ENCODE measurements at regions of chr5 and their contacts with region 1.

Region 1: DNA sequence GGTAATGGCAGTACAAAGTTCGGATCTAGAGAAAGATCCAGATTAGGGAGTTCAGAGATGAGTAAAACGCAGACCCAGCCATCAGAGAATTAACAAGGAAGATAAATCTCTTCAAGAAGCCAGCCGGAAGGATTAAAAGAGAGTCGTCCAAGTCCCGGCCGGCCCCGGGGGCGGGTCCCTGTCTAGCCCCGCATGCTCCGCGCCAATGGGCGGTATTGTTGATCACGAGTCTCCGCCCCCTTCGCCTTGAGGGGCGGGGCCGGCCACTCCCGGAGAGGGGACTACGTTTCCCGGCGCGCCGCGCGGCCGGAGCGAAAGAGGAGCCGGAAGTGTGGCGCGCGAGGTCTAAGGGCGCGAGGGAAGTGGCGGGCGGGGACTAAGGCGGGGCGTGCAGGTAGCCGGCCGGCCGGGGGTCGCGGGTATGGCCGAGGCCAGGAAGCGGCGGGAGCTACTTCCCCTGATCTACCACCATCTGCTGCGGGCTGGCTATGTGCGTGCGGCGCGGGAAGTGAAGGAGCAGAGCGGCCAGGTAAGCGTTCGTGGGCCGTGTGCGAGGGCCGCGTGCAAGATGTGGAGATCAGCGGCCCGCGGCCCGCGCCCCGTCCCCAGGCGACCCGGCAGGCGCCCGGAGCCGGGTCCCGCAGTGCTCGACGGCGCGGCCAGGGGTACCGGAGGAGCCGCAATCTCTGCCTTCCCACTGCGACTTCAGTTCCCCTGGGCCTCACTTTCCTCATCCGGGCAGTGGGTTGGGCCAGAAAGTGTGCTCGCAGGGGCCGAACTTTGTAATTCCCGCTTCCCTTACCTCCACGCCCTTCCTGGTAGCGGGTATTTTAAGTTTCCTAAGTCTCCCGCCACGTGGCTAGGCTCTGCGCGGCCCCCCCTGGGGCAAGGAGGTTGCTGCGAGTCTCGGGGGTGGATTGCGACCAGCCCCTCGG is at the start of gene TCOF1:
- DNase-seq: peak; percentile 96 to 98 (median 96)
- ATAC-seq: peak; percentile 97 to 100 (median 99)
- H3K4me3 ChIP-seq: peak within 1 kb of the TSS; percentile 72 to 99 (median 92)
- H3K27ac ChIP-seq: peak within 1 kb of the TSS in 10 of 12 donors; percentile 41 to 76 (median 65)
- H3K4me1 ChIP-seq: peaks cover 0 to 23% (median 12%) of the 10 kb centered on the region in 12 donors
- H3K27me3 ChIP-seq: no peaks in the 10 kb centered on the region
- CTCF ChIP-seq: peak in 1 of 12 donors; percentile 12
- POLR2A ChIP-seq: no peak
- total RNA-seq, gene TCOF1: 12.6 to 29.9 (median 16.0) TPM

Region 2: GRCh38 chr5:150022163-150022540 is 335.4 kb before region 1 on chr5:
- intact Hi-C with region 1: loop called in 1 of 10 experiments (anchors 10 kb)
- DNase-seq: peak in 1 of 5 donors; percentile 36
- ATAC-seq: peak; percentile 48 to 79 (median 76)
- H3K4me3 ChIP-seq: peak overlapping the region in 3 of 12 donors; percentile 1 to 16 (median 13)
- H3K27ac ChIP-seq: peak overlapping the region; percentile 53 to 81 (median 68)
- H3K4me1 ChIP-seq: peaks cover 5 to 54% (median 40%) of the 10 kb centered on the region in 12 donors
- H3K27me3 ChIP-seq: no peaks in the 10 kb centered on the region
- CTCF ChIP-seq: no peak
- POLR2A ChIP-seq: no peak

Region 3: GRCh38 chr5:150129813-150130492 is 227.6 kb before region 1 on chr5:
- intact Hi-C with region 1: loop called in 2 of 10 experiments (anchors 10 kb)
- DNase-seq: peak; percentile 73 to 85 (median 79)
- ATAC-seq: peak; percentile 47 to 83 (median 75)
- H3K4me3 ChIP-seq: peak overlapping the region in 7 of 12 donors; percentile 3 to 43 (median 6)
- H3K27ac ChIP-seq: peak overlapping the region in 7 of 12 donors; percentile 3 to 34 (median 20)
- H3K4me1 ChIP-seq: peaks cover 0 to 48% (median 19%) of the 10 kb centered on the region in 12 donors
- H3K27me3 ChIP-seq: no peaks in the 10 kb centered on the region
- CTCF ChIP-seq: peak; percentile 86 to 97 (median 92)
- POLR2A ChIP-seq: no peak

Region 4: GRCh38 chr5:150161242-150162141 is 196.1 kb before region 1 on chr5:
- intact Hi-C with region 1: loop called in 3 of 10 experiments (anchors 5 to 10 kb)
- DNase-seq: peak; percentile 82 to 91 (median 83)
- ATAC-seq: peak; percentile 41 to 70 (median 56)
- H3K4me3 ChIP-seq: no peak overlapping the region
- H3K27ac ChIP-seq: peak overlapping the region in 11 of 12 donors; percentile 37 to 96 (median 84)
- H3K4me1 ChIP-seq: peaks cover 0 to 85% (median 58%) of the 10 kb centered on the region in 12 donors
- H3K27me3 ChIP-seq: peaks cover 0 to 4% (median 0%) of the 10 kb centered on the region in 9 donors
- CTCF ChIP-seq: peak; percentile 83 to 95 (median 91)
- POLR2A ChIP-seq: no peak

Region 5: GRCh38 chr5:150245111-150245789 is 112.3 kb before region 1 on chr5:
- intact Hi-C with region 1: loop called in 1 of 10 experiments (anchors 10 kb)
- DNase-seq: peak; percentile 77 to 86 (median 82)
- ATAC-seq: peak; percentile 89 to 98 (median 96)
- H3K4me3 ChIP-seq: peak overlapping the region in 9 of 12 donors; percentile 22 to 49 (median 38)
- H3K27ac ChIP-seq: peak overlapping the region in 10 of 12 donors; percentile 10 to 82 (median 50)
- H3K4me1 ChIP-seq: peaks cover 0 to 32% (median 7%) of the 10 kb centered on the region in 12 donors
- H3K27me3 ChIP-seq: no peaks in the 10 kb centered on the region
- CTCF ChIP-seq: no peak
- POLR2A ChIP-seq: no peak

Region 6: DNA sequence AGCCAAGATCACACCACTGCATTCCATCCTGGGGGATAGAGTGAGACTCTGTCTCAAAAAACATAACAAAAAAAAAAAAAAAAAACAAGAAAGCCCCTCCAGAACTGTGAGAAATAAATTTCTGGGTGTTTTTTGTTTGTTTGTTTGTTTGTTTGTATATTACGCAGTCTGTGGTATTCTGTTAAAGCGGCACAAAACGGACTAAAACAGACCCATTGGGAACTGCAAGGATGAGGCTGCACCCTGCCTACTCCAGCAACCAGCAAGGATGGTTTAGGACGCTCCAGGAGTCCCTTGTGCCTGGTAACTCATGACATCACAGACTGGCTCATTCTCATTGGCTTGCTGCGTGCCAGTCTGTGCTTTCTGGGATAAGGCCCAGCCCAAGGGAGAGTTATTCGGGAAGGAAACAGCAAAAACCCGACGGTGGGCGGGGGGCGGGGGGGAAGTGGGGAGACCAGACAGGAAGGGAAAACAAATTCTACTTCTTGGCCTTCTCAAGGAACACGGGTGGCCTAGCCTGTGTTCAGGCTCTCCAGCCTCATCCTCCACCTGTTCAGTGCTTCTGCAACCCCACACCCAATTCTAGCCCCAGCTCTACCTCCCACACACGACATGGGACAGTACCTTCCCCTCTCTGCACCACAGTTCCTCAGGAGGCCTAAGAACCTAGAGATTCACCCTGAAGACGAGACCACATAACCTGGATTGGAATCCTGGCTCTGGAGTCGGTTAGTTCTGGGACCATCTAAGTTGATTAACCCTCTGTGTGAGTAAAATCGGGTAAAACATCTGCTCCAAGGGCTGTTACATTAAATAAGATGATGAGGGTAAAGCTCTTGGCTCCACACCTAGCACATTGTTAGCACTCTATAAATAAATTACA is 52.3 kb after region 1 on chr5:
- intact Hi-C with region 1: no loop called
- DNase-seq: peak; percentile 75 to 89 (median 87)
- ATAC-seq: peak; percentile 84 to 90 (median 89)
- H3K4me3 ChIP-seq: peak overlapping the region in 10 of 12 donors; percentile 27 to 82 (median 62)
- H3K27ac ChIP-seq: peak overlapping the region; percentile 69 to 98 (median 88)
- H3K4me1 ChIP-seq: peaks cover 0 to 69% (median 29%) of the 10 kb centered on the region in 12 donors
- H3K27me3 ChIP-seq: no peaks in the 10 kb centered on the region
- CTCF ChIP-seq: no peak
- POLR2A ChIP-seq: peak in 1 of 2 donors; percentile 24

Region 7: DNA sequence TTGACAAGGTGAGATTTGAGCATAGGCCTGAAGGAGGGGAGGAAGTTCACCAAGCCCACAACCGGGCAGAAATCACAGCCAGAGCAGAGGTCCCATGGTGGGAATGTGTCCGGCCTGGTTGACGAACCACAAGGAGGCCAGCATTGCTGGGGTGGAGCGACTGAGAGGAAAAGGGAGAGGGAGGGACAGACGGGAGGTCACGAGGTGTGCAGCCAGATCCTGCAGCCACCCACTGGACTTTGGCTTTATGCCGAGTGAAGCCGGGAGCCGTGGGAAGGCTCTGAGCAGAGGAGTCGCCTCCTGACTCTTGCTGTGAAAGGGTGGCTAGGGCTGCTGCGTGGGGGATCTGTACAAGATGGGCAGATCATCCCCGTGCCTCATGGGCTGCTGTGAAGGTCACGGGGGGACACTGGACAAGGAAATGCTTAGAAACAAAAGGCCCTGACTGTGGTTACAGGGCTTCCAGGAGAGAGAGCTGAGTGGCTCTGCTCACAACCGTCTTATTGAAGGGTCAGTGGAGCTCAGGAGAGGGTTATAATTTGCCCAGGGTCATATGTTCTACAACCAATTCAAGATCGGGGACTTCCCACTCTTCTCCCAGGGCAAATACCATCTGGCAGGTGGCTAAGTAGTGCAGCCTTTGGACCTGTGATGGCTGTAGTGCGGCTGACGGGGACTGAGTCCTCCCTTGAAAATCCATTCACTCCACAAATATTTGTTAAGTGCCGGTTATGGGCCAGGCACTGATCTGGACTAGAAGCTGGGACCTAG is 70.7 kb after region 1 on chr5:
- intact Hi-C with region 1: no loop called
- DNase-seq: peak; percentile 81 to 89 (median 85)
- ATAC-seq: peak; percentile 84 to 95 (median 90)
- H3K4me3 ChIP-seq: no peak overlapping the region
- H3K27ac ChIP-seq: peak overlapping the region in 11 of 12 donors; percentile 38 to 84 (median 66)
- H3K4me1 ChIP-seq: peaks cover 0 to 22% (median 4%) of the 10 kb centered on the region in 12 donors
- H3K27me3 ChIP-seq: no peaks in the 10 kb centered on the region
- CTCF ChIP-seq: no peak
- POLR2A ChIP-seq: no peak

Region 8: DNA sequence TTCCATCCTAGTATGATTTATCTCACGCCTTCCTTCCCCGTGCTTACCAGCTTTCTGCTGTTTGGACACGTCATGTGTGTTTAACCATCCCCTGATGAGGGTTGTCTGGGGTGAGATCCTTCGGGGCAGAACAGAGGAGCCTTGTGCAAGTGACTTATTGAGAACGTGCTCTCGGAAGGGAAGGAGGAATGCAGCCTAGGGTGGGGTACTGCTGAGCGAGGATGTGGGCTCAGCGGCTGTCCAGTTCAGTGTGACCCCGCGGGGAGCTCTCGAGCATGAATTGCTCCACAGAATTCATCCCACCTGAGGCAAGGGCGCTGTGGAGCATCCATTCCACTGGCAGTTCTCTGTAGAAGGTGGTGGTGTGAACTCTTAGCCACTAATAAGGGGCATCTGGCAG is 307.5 kb after region 1 on chr5:
- intact Hi-C with region 1: no loop called
- DNase-seq: no peak
- ATAC-seq: no peak
- H3K4me3 ChIP-seq: no peak overlapping the region
- H3K27ac ChIP-seq: no peak overlapping the region
- H3K4me1 ChIP-seq: peaks cover 0 to 14% (median 2%) of the 10 kb centered on the region in 12 donors
- H3K27me3 ChIP-seq: no peaks in the 10 kb centered on the region
- CTCF ChIP-seq: no peak
- POLR2A ChIP-seq: no peak

Measured in heart left ventricle (tissue), 16 donors.